WTC11 (cell line): ENCODE measurements at regions of chr1 and their contacts with region 1.

Region 1: GRCh38 chr1:47449822-47450552 is 12.1 kb downstream of the FOXD2 start:
- DNase-seq: peak; percentile 89
- ATAC-seq: peak; percentile 91
- H3K4me3 Mint-ChIP-seq: peak overlapping the region; percentile 58
- H3K27ac Mint-ChIP-seq: no peak overlapping the region
- H3K4me1 Mint-ChIP-seq: peaks cover 36% of the 10 kb centered on the region
- H3K27me3 Mint-ChIP-seq: no peaks in the 10 kb centered on the region; the same call in none of the 2 replicates
- CTCF ChIP-seq: peak; percentile 58

Region 2: DNA sequence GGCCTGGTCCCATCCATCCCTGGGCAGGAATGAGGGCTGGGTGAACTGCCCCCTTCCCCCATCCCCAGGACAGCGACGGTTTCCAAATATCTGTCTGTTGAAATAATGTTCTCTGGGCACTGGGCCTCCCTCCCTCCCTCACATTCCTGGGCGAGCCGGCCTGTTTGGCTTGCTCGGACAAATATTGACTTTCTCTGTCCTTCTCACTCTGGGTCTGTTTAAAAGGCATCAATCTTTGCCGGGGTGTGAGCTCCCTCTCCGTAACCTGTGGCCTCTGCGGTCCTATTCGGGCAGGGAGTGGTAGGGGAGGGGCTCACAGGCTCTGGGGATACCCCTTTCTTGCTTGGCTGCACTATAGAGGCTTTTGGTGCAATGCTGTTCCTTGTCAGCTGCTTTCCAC is 28.1 kb after region 1 on chr1:
- CTCF ChIA-PET with region 1: interaction called, 16 read pairs
- POLR2A ChIA-PET with region 1: no interaction called
- DNase-seq: no peak
- ATAC-seq: no peak
- H3K4me3 Mint-ChIP-seq: no peak overlapping the region
- H3K27ac Mint-ChIP-seq: 0 out of 2 replicates have a peak overlapping the region, but pooled peaks have one; percentile 27
- H3K4me1 Mint-ChIP-seq: peaks cover 12% of the 10 kb centered on the region
- H3K27me3 Mint-ChIP-seq: peaks cover 19% of the 10 kb centered on the region
- CTCF ChIP-seq: no peak

Region 3: DNA sequence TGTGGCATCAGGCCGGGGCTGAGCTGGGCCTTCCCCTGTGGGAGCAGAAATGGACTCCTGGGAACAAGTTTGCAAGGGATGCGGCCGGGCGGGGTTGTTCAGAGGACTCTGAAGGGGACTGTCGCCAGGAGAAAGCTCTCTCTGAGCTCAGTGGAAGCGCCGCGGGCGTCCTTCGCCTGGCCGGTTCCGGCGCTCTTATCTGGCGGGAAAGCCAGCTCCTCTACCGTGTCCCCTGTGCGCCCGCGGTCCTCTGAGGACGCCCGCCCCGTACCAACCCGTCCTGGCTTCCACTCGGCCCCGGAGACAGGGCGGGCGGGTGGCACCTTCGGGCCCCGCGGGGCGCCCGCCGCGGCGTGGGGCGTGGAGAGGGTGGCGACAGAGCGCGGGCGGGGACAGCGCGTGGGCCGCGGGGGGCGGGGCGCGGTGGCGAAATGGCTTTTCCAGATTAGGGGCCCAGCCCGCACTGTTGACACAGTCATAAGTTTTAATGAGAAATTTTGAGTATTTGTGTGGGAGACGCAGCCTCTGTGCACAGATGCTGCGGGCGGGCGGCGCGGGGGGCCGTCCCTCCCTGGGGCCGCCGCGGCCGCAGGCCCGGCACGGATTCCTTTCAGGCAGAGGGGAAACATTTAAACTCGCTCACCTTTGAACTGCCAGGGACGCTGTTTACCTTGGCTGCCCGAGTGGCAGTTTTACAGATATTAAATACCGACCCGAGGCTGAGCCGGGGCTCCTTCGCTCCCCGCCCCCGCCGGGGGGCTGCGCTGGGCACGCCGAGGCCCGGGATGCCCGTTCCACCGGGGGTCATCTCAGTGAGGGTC is 58.1 kb after region 1 on chr1:
- CTCF ChIA-PET with region 1: interaction called, 12 read pairs
- POLR2A ChIA-PET with region 1: no interaction called
- DNase-seq: peak; percentile 53
- ATAC-seq: peak; percentile 60
- H3K4me3 Mint-ChIP-seq: peak overlapping the region; percentile 77
- H3K27ac Mint-ChIP-seq: no peak overlapping the region
- H3K4me1 Mint-ChIP-seq: peaks cover 13% of the 10 kb centered on the region
- H3K27me3 Mint-ChIP-seq: peaks cover 89% of the 10 kb centered on the region
- CTCF ChIP-seq: no peak

Region 4: DNA sequence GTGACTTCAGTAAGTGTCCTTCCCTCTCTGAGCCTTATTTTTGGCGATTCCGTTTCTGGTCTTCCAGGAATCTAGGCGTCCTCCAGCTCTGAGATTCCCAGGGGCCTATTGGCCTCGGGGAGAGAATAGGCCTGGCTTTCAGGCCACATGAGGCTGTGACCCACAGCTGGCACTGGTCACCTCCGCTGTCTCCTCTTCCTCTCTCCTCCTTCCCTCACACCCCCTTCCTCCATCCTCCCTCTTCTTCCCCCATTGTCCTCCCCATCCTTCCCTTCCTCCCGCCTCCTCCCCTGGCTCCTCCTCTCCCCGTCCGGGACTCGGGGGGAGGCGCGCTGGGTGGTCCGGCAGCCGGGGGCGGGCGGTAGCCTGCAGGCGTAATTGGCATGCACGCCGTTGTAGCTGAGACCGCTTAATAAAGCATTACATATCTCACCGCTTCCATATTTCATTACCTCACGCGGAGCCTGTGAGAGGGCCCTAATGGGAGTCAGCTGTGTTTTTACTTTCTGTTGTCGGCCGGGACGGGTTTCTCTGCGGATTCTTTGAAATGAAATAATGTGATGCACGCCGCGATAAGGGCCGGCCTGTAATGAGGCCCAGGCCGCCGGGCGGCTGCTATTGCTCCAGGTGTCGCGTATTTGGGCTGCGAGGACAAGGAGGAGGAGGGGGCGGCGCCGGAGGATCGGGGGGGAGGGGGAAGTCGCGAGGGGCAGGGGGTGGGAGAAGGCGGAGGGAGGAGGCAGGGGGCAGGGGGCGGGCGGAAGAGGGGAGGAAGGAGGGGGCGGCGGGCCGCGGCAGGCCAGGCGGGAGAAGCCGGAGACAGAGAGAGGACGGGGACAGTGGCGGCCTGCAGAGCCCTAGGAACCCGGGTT is 83.2 kb after region 1 on chr1:
- CTCF ChIA-PET with region 1: interaction called, 10 read pairs
- POLR2A ChIA-PET with region 1: no interaction called
- DNase-seq: peak; percentile 73
- ATAC-seq: peak; percentile 76
- H3K4me3 Mint-ChIP-seq: peak overlapping the region; percentile 78
- H3K27ac Mint-ChIP-seq: peak overlapping the region; percentile 80; the same call in 1 of the 2 replicates
- H3K4me1 Mint-ChIP-seq: peaks cover 33% of the 10 kb centered on the region
- H3K27me3 Mint-ChIP-seq: peaks cover 34% of the 10 kb centered on the region
- CTCF ChIP-seq: no peak

Region 5: GRCh38 chr1:47558601-47559593 is 108.9 kb after region 1 on chr1:
- CTCF ChIA-PET with region 1: no interaction called
- POLR2A ChIA-PET with region 1: no interaction called
- DNase-seq: no peak
- ATAC-seq: no peak
- H3K4me3 Mint-ChIP-seq: no peak overlapping the region
- H3K27ac Mint-ChIP-seq: no peak overlapping the region
- H3K4me1 Mint-ChIP-seq: peaks cover 33% of the 10 kb centered on the region
- H3K27me3 Mint-ChIP-seq: peaks cover 51% of the 10 kb centered on the region
- CTCF ChIP-seq: no peak

Region 6: DNA sequence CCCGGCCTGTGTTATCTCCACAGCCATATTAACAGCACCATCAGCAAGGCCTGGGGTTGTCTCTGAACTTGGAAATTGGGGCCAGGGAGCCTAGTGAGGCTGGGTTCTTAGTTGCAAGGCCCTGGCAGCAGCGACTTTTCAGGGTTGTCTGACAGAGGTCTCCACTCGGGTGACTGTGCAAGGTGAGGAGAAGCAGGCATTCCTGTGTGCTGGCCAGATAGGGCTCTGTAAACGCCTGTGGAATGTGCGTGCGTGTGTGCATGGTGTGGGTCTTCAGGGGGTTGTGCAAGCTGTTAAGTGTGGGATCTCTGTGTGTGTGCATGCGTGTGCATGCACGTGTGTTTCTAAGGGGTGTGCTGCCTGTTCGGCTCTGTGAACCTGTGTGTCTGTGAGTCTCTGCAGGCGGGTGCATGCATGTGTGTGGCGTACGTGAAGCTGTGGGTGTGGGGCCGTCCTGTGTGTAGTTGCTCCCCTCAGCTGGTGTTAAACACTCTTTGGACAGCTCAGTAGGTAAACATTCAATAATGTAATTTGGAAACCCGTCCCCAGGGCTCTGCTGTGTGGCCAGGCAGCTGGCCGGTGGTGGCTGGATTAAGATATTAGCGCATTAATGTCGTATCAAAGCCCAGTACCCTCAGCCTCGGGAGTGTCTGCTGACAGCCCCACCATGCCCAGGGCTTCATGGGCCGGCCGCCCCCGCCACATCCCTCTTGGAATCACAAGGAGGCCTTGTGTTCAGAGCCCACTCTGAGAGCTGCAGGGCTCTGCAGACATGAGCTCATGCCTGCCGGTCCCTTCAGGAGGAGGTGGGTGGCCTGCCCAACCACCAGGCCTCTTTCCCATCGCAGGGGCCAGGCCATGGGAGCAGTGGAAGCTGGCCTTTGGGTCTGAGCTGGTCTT is 177.7 kb after region 1 on chr1:
- CTCF ChIA-PET with region 1: interaction called, 12 read pairs
- POLR2A ChIA-PET with region 1: no interaction called
- DNase-seq: no peak
- ATAC-seq: no peak
- H3K4me3 Mint-ChIP-seq: no peak overlapping the region
- H3K27ac Mint-ChIP-seq: no peak overlapping the region
- H3K4me1 Mint-ChIP-seq: peaks cover 6% of the 10 kb centered on the region
- H3K27me3 Mint-ChIP-seq: peaks cover 9% of the 10 kb centered on the region
- CTCF ChIP-seq: no peak